Activated T-helper 1 cell treated with anti-CD3 and anti-CD28 coated beads, Interleukin-12 subunit alpha, Interleukin-12 subunit beta, Interleukin-2, Interleukin-4 antibody, amounts not matched to agents 30 ng/mL and 10 ng/mL and 1 ng/mL, durations not matched to agents 14 hours and 24 hours and 36 hours (primary cell): ENCODE measurements at regions of chr13 and their contacts with region 1.

Region 1: DNA sequence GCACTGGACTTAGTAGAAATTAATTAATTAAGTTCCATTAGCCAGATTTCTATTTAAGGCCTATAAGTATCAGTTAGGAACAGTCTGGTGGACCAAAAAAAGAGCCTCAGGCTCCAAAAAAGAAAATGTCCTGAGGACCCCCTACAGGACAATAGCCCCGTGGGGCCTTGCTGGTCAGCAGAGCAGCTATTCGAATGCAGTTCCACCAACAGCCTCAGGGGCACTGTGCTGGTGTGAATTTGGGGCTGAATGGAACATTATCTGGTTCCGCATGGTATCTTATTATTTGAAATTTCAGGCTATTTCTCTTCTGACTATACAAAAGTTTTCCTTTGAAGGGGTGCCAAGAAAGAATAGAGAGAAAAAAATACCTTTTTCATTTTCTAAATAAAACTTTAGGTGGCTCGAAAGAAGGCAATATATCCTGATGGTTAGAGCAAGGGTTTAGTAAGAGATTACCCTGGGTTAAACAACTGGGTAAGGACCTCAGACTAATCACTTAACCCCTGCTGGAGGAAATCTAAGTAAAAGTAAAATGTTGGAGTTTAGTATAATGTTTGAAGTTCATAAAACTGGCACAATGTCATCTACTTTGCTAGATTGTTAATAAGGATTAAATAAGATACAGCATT is 147.2 kb downstream of the MIPEP start:
- DNase-seq: no peak
- H3K4me3 Mint-ChIP-seq: no peak overlapping the region
- H3K27ac Mint-ChIP-seq: no peak overlapping the region
- H3K4me1 Mint-ChIP-seq: peaks cover 27% of the 10 kb centered on the region
- H3K27me3 Mint-ChIP-seq: peaks cover 10% of the 10 kb centered on the region

Region 2: GRCh38 chr13:23715762-23716235 is 26.2 kb before region 1 on chr13:
- intact Hi-C with region 1: no loop called
- DNase-seq: no peak
- H3K4me3 Mint-ChIP-seq: no peak overlapping the region
- H3K27ac Mint-ChIP-seq: no peak overlapping the region
- H3K4me1 Mint-ChIP-seq: no peaks in the 10 kb centered on the region
- H3K27me3 Mint-ChIP-seq: peaks cover 16% of the 10 kb centered on the region

Region 3: DNA sequence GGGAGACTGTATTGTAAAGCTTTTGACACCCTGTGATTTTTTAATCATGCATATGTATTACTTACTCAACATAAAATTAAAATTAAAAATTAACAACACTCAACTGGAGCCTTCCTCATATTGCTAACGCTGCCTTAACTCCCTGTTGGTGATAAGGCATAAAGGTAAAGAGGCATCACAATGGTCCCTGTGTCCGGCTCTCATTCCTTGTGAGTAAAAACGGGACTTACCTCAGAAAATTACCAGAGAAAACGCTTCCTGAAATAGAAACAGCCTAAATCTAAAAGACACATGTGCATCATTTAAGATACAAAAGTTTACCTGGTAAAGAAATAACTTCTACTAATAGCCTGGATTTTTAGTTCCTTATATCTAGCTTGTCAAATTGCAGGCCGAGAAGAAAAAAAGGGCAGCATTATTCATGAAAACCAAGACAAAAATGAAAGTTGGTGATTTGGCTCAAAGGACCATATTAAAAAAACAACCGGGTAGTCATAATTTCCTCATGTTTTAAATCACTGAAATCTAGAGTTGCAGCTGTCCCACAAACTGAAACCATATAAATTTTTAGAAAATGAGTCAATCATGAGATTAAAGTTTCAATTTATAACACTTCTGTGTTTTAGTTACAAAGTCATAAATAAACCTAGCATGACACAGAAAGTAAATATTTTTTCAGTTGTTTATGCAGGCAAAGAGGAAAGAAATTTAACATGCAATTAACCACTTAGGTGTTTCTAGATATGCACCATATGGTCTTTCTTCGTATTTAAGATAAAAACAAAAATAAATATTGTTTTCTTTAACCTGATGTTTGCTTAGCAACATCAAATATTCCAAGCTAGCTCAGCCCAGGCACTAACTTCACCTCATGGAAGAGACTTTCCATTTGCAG is 52.5 kb after region 1 on chr13:
- intact Hi-C with region 1: loop called (anchors 1 kb)
- DNase-seq: no peak
- H3K4me3 Mint-ChIP-seq: no peak overlapping the region
- H3K27ac Mint-ChIP-seq: no peak overlapping the region
- H3K4me1 Mint-ChIP-seq: peaks cover under 1% of the 10 kb centered on the region
- H3K27me3 Mint-ChIP-seq: no peaks in the 10 kb centered on the region

Region 4: GRCh38 chr13:23833733-23834626 is 92.0 kb after region 1 on chr13:
- intact Hi-C with region 1: no loop called
- DNase-seq: no peak
- H3K4me3 Mint-ChIP-seq: no peak overlapping the region
- H3K27ac Mint-ChIP-seq: no peak overlapping the region
- H3K4me1 Mint-ChIP-seq: no peaks in the 10 kb centered on the region
- H3K27me3 Mint-ChIP-seq: no peaks in the 10 kb centered on the region